Astrocyte of the cerebellum (primary cell): ENCODE measurements at regions of chr12 and their contacts with region 1.

Region 1: DNA sequence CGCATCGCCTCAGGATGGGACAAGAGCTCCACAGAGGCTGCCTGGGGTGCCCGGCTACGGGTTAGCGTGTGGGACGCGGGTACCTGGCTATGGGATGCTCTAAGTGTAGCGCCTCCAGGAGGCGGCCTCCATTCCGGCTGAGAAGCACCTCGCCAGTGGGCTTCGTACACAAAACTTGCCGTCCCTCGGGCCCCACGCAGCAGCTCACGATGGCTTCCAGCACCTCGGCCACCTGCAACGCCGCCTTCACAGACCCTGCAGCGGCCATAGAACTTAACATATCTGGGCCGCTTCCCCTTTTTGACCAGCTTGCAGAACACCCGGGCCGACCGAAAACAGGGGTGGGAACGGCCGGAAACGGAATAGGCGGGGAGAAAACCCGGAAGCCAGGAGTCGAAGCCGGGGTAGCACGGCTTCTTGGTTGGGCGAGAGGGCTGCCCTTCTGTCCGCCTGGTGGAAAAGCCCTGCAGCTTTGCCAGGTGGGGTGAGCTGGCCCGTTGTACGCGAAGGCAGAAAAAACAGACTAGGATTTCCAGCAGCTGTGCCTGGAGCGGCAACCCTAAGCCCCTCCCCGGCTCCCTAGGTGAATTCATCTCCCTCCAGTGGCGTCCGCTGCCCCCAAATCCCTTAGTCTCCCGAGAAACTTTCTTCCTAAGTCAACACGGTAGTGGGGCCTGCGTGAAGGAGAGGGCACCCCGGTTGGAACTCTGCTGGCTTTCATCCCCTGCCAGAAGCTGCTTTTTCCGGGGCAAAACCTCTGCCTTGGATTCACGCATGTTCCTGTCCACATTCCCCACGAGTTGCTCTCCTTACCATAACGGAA is at the start of gene BBS10:
- DNase-seq: peak; percentile 81
- H3K4me3 ChIP-seq: peak within 1 kb of the TSS; percentile 75
- CTCF ChIP-seq: peak; percentile 52

Region 2: DNA sequence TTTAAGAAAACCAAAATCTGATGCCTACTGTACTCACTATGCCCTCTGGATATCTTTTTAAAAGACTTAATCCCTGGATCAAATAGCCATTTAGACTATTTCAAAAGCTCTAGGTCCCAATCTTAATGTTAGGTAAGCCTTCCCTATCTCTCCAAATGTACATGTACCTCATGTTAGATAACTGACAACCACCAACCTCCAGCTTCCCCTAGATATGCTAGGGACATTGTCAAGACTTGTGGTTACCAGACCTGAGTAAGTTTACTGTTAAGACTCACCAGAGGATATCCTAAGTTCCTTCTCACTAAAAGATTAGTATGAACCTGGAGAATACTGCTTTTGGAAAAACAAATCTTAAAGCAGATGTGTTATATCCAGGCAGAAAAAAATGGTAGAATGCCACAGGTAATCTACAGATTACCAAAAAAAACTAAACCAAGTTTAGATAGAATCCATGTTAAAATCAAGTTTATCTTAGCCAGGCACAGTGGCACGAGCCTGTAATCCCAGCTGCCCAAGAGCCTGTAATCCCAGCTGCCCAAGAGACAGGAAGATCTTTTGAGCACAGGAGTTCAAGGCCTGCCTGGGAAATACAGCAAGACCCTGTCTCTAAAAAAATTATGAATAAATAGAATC is 273.5 kb before region 1 on chr12:
- in situ Hi-C with region 1: loop called (anchors 25 kb)
- DNase-seq: no peak
- H3K4me3 ChIP-seq: no peak overlapping the region
- CTCF ChIP-seq: no peak